CD8-positive, alpha-beta T cell (primary cell): ENCODE measurements at regions of chr5 and their contacts with region 1.

Region 1: DNA sequence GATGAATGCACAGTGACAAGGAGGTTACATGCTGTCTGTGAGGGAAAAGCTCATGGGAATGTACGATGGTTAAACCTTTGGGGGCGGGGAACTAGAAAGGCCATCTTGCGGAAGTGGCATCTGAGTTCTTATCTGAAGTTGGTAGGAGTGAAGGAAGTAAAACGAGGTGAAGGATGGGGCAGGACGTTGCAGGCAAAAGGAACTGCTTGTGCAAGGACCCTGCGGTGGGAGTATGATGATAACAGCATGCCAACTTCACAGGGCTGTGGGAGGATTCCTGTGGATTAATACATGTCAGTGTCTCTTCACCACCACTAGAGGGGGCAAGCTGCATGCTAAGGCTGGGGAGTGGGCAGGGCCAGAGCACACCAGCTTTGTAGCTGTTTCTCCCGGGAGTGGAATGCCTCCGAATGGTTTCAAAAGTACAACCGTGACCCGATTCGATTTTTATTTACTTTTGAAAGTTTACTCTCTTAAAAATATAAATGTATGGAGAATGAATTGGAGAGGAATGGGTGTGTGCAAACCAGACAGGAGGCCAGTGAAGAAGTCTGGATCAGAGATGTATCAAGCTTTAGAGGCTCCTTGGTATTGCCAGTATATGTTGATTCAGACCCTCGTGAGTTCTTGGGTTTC is 62.5 kb downstream of the CYFIP2 start:
- DNase-seq: peak in 7 of 9 experiments; percentile 27 to 83 (median 60)
- ATAC-seq: peak; percentile 95
- H3K4me3 ChIP-seq: no peak overlapping the region
- H3K4me3 Mint-ChIP-seq: peak overlapping the region; percentile 47
- H3K27ac ChIP-seq: peak overlapping the region in 1 of 2 experiments; percentile 37
- H3K27ac Mint-ChIP-seq: peak overlapping the region; percentile 95
- H3K4me1 ChIP-seq: peaks cover 28% of the 10 kb centered on the region
- H3K4me1 Mint-ChIP-seq: peaks cover 34% of the 10 kb centered on the region
- H3K27me3 ChIP-seq: no peaks in the 10 kb centered on the region
- H3K27me3 Mint-ChIP-seq: no peaks in the 10 kb centered on the region
- CTCF ChIP-seq: peak; percentile 83

Region 2: DNA sequence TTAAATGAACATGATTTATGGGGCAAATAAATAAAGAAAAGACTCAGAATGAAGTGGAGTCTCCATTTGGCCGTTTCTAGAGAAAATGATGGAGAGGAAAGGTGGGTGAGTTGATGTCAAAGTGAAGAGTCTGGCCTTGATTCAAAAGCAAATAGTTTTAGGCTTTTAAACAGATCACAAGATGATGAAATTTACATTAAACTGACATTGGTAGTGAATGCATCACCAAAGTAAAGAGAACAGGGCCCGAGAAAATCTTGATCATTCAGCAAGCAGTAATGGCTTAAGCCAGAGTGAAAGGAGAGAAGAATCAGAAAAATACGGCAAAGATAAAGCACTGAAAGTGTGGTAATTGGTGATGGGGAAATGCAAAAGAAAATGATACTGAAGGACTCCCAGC is 1461.4 kb before region 1 on chr5:
- CTCF ChIA-PET with region 1: no interaction called
- POLR2A ChIA-PET with region 1: no interaction called
- intact Hi-C with region 1: no loop called
- DNase-seq: no peak
- ATAC-seq: no peak
- H3K4me3 ChIP-seq: no peak overlapping the region
- H3K4me3 Mint-ChIP-seq: no peak overlapping the region
- H3K27ac ChIP-seq: no peak overlapping the region
- H3K27ac Mint-ChIP-seq: no peak overlapping the region
- H3K4me1 ChIP-seq: no peaks in the 10 kb centered on the region
- H3K4me1 Mint-ChIP-seq: no peaks in the 10 kb centered on the region
- H3K27me3 ChIP-seq: no peaks in the 10 kb centered on the region
- H3K27me3 Mint-ChIP-seq: peaks cover 15% of the 10 kb centered on the region
- CTCF ChIP-seq: no peak

Region 3: GRCh38 chr5:156137071-156137869 is 1191.1 kb before region 1 on chr5:
- CTCF ChIA-PET with region 1: no interaction called
- POLR2A ChIA-PET with region 1: no interaction called
- intact Hi-C with region 1: no loop called
- DNase-seq: peak in 1 of 9 experiments; percentile 2
- ATAC-seq: no peak
- H3K4me3 ChIP-seq: no peak overlapping the region
- H3K4me3 Mint-ChIP-seq: no peak overlapping the region
- H3K27ac ChIP-seq: no peak overlapping the region
- H3K27ac Mint-ChIP-seq: no peak overlapping the region
- H3K4me1 ChIP-seq: no peaks in the 10 kb centered on the region
- H3K4me1 Mint-ChIP-seq: no peaks in the 10 kb centered on the region
- H3K27me3 ChIP-seq: no peaks in the 10 kb centered on the region
- H3K27me3 Mint-ChIP-seq: peaks cover 2% of the 10 kb centered on the region
- CTCF ChIP-seq: no peak

Region 4: GRCh38 chr5:157312492-157312891 is 15.9 kb before region 1 on chr5:
- CTCF ChIA-PET with region 1: interaction called, 65 read pairs
- POLR2A ChIA-PET with region 1: interaction called, 3 read pairs
- intact Hi-C with region 1: no loop called
- DNase-seq: peak; percentile 24 to 87 (median 66)
- ATAC-seq: peak; percentile 95
- H3K4me3 ChIP-seq: no peak overlapping the region
- H3K4me3 Mint-ChIP-seq: no peak overlapping the region
- H3K27ac ChIP-seq: peak overlapping the region in 1 of 2 experiments; percentile 11
- H3K27ac Mint-ChIP-seq: peak overlapping the region; percentile 81
- H3K4me1 ChIP-seq: peaks cover 37% of the 10 kb centered on the region
- H3K4me1 Mint-ChIP-seq: peaks cover 38% of the 10 kb centered on the region
- H3K27me3 ChIP-seq: no peaks in the 10 kb centered on the region
- H3K27me3 Mint-ChIP-seq: no peaks in the 10 kb centered on the region
- CTCF ChIP-seq: peak; percentile 62

Region 5: GRCh38 chr5:157342822-157343402 is 14.5 kb after region 1 on chr5:
- CTCF ChIA-PET with region 1: interaction called, 27 read pairs
- POLR2A ChIA-PET with region 1: no interaction called
- intact Hi-C with region 1: no loop called
- DNase-seq: peak in 4 of 9 experiments; percentile 32 to 41 (median 35)
- ATAC-seq: peak; percentile 35
- H3K4me3 ChIP-seq: no peak overlapping the region
- H3K4me3 Mint-ChIP-seq: no peak overlapping the region
- H3K27ac ChIP-seq: no peak overlapping the region
- H3K27ac Mint-ChIP-seq: peak overlapping the region; percentile 81
- H3K4me1 ChIP-seq: no peaks in the 10 kb centered on the region
- H3K4me1 Mint-ChIP-seq: peaks cover 24% of the 10 kb centered on the region
- H3K27me3 ChIP-seq: no peaks in the 10 kb centered on the region
- H3K27me3 Mint-ChIP-seq: no peaks in the 10 kb centered on the region
- CTCF ChIP-seq: peak; percentile 49

Region 6: DNA sequence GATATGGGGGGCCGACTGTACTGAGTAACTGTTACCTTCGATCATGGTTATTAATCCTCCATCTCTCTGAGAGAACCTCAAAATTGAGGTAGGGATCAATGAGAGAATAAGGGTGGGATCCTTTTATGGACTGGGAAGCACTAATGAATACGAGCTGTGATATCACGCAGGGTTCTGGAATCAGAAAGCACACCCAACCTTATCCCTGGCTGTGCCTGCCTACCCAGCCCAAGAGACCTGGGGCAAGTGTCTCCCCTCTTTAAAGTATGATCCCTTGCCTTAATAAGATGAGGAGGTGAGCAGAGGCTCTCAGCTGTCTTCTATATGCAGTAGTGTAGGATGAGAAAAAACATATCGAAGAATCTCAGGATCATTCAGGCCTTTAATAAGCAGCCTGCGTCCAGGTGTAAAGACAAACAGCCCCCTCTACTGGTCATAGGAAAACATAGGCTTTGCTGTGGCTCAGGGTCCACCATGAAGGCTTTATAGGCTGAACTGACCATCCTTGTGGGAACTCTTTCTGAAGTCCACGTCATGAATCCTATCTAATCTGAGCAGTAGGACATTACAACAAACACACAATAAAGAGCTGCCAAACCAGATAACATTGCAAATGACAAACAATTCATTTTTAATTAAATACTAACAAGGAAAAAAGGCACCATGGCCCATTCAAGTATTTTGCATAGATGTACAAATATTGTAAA is 148.5 kb after region 1 on chr5:
- CTCF ChIA-PET with region 1: interaction called, 4 read pairs
- POLR2A ChIA-PET with region 1: no interaction called
- intact Hi-C with region 1: loop called (anchors 2 to 5 kb)
- DNase-seq: peak in 2 of 9 experiments; percentile 53 to 61
- ATAC-seq: no peak
- H3K4me3 ChIP-seq: no peak overlapping the region
- H3K4me3 Mint-ChIP-seq: no peak overlapping the region
- H3K27ac ChIP-seq: no peak overlapping the region
- H3K27ac Mint-ChIP-seq: no peak overlapping the region
- H3K4me1 ChIP-seq: no peaks in the 10 kb centered on the region
- H3K4me1 Mint-ChIP-seq: no peaks in the 10 kb centered on the region
- H3K27me3 ChIP-seq: no peaks in the 10 kb centered on the region
- H3K27me3 Mint-ChIP-seq: no peaks in the 10 kb centered on the region
- CTCF ChIP-seq: peak; percentile 67

Region 7: DNA sequence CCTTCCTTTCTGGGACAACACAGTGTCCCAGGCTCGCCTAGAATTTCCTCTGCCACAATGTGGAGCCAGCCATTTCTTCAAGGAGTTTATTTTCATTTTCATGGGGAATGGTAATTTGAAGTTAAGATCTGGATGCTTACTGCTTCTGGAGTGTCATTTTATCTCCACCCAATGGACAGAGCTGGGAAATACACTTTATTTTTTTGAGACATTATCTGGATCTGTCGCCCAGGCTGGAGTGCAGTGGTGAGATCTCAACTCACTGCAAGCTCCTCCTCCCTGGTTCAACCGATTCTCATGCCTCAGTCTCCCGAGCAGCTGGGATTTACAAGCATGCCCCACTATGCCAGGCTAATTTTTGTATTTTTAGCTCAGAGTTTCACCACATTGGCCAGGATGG is 390.1 kb after region 1 on chr5:
- CTCF ChIA-PET with region 1: no interaction called
- POLR2A ChIA-PET with region 1: no interaction called
- intact Hi-C with region 1: loop called in 1 of 2 experiments (anchors 1 kb)
- DNase-seq: peak in 3 of 9 experiments; percentile 17 to 59 (median 57)
- ATAC-seq: peak; percentile 77
- H3K4me3 ChIP-seq: no peak overlapping the region
- H3K4me3 Mint-ChIP-seq: no peak overlapping the region
- H3K27ac ChIP-seq: no peak overlapping the region
- H3K27ac Mint-ChIP-seq: no peak overlapping the region
- H3K4me1 ChIP-seq: no peaks in the 10 kb centered on the region
- H3K4me1 Mint-ChIP-seq: peaks cover 12% of the 10 kb centered on the region
- H3K27me3 ChIP-seq: no peaks in the 10 kb centered on the region
- H3K27me3 Mint-ChIP-seq: no peaks in the 10 kb centered on the region
- CTCF ChIP-seq: peak; percentile 36

Region 8: GRCh38 chr5:157761690-157762621 is 433.6 kb after region 1 on chr5:
- CTCF ChIA-PET with region 1: no interaction called
- POLR2A ChIA-PET with region 1: no interaction called
- intact Hi-C with region 1: no loop called
- DNase-seq: peak in 3 of 9 experiments; percentile 18 to 62 (median 54)
- ATAC-seq: peak; percentile 84
- H3K4me3 ChIP-seq: no peak overlapping the region
- H3K4me3 Mint-ChIP-seq: no peak overlapping the region
- H3K27ac ChIP-seq: no peak overlapping the region
- H3K27ac Mint-ChIP-seq: no peak overlapping the region
- H3K4me1 ChIP-seq: no peaks in the 10 kb centered on the region
- H3K4me1 Mint-ChIP-seq: peaks cover 4% of the 10 kb centered on the region
- H3K27me3 ChIP-seq: no peaks in the 10 kb centered on the region
- H3K27me3 Mint-ChIP-seq: no peaks in the 10 kb centered on the region
- CTCF ChIP-seq: peak; percentile 77